ENCODE measurements at regions of chr2 and their contacts with region 1.

Region 1: GRCh38 chr2:36355151-36355889 is at the start of gene CRIM1:
- DNase-seq: peak; percentile 88
- H3K4me3 ChIP-seq: peak within 1 kb of the TSS; percentile 85 to 98 (median 87)
- H3K27ac ChIP-seq: peak within 1 kb of the TSS; percentile 75
- H3K4me1 ChIP-seq: peaks cover 42% of the 10 kb centered on the region
- H3K27me3 ChIP-seq: no peaks in the 10 kb centered on the region
- CTCF ChIP-seq: no peak
- POLR2A ChIP-seq: peak; percentile 98
- total RNA-seq, gene CRIM1: 649 and 675 TPM in 2 replicates

Region 2: GRCh38 chr2:35447215-35447614 is 908.1 kb before region 1 on chr2:
- CTCF ChIA-PET with region 1: no interaction called
- POLR2A ChIA-PET with region 1: no interaction called
- dilution Hi-C with region 1: no loop called
- intact Hi-C with region 1: no loop called
- DNase-seq: no peak
- H3K4me3 ChIP-seq: no peak overlapping the region
- H3K27ac ChIP-seq: no peak overlapping the region
- H3K4me1 ChIP-seq: no peaks in the 10 kb centered on the region
- H3K27me3 ChIP-seq: no peaks in the 10 kb centered on the region
- CTCF ChIP-seq: no peak
- POLR2A ChIP-seq: no peak

Region 3: DNA sequence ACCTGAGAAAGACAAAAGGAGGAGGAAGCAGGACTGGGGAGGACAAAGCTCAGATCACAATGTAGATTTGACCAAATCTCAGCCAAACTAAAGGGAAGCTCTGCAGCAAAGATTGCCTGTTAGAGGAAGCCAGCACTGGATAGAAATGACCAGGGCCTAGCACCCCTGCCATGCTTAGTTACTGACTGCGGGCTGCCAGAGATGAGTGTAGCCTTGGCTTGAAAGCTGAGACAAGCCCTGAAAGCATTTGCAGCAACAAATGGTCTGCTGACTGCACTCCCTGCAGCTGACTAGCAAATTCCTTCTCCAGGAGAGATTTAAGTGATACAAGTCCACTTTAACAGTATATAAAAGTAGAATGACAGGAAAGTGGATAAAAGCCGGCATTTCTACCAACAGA is 140.6 kb before region 1 on chr2:
- CTCF ChIA-PET with region 1: no interaction called
- POLR2A ChIA-PET with region 1: no interaction called
- dilution Hi-C with region 1: no loop called
- intact Hi-C with region 1: no loop called
- DNase-seq: no peak
- H3K4me3 ChIP-seq: no peak overlapping the region
- H3K27ac ChIP-seq: no peak overlapping the region
- H3K4me1 ChIP-seq: no peaks in the 10 kb centered on the region
- H3K27me3 ChIP-seq: peaks cover 0 to 2% of the 10 kb centered on the region in 2 experiments
- CTCF ChIP-seq: no peak
- POLR2A ChIP-seq: no peak

Region 4: DNA sequence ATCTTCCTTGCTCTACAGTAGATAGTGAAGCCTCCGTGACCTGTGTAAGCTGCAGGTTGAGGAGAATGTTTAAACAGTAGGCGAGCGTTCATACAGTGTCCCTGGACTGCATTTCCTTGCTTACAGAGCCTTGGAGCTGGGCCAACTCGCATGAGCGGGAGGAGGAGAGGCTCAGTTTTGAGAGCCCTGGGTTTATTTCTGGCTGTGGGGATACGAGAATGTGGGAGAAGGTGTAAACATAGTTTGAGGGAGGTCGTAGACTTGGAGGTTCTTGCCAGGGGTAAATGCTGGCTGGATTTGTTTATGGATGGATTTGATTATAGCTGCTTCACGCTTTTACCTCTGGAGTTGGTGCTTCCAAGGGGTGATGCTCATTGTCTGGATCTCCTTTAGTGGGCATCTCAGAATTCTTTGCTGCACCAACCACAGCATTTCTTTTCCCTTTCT is 21.0 kb after region 1 on chr2:
- CTCF ChIA-PET with region 1: interaction called, 20 read pairs
- POLR2A ChIA-PET with region 1: interaction called, 17 read pairs
- dilution Hi-C with region 1: no loop called
- intact Hi-C with region 1: loop called (anchors 1 kb)
- DNase-seq: peak; percentile 65
- H3K4me3 ChIP-seq: no peak overlapping the region
- H3K27ac ChIP-seq: peak overlapping the region; percentile 44
- H3K4me1 ChIP-seq: peaks cover 98% of the 10 kb centered on the region
- H3K27me3 ChIP-seq: no peaks in the 10 kb centered on the region
- CTCF ChIP-seq: no peak
- POLR2A ChIP-seq: no peak

Region 5: GRCh38 chr2:36413218-36413617 is 57.9 kb after region 1 on chr2:
- CTCF ChIA-PET with region 1: interaction called, 7 read pairs
- POLR2A ChIA-PET with region 1: interaction called, 5 read pairs
- dilution Hi-C with region 1: no loop called
- intact Hi-C with region 1: loop called (anchors 1 kb)
- DNase-seq: peak; percentile 88
- H3K4me3 ChIP-seq: peak overlapping the region in 1 of 3 experiments; percentile 8
- H3K27ac ChIP-seq: peak overlapping the region; percentile 92
- H3K4me1 ChIP-seq: peaks cover 88% of the 10 kb centered on the region
- H3K27me3 ChIP-seq: no peaks in the 10 kb centered on the region
- CTCF ChIP-seq: no peak
- POLR2A ChIP-seq: peak; percentile 78

Region 6: GRCh38 chr2:36502081-36502480 is 146.8 kb after region 1 on chr2:
- CTCF ChIA-PET with region 1: interaction called, 35 read pairs
- POLR2A ChIA-PET with region 1: interaction called, 5 read pairs
- dilution Hi-C with region 1: no loop called
- intact Hi-C with region 1: loop called (anchors 1 kb)
- DNase-seq: no peak
- H3K4me3 ChIP-seq: no peak overlapping the region
- H3K27ac ChIP-seq: no peak overlapping the region
- H3K4me1 ChIP-seq: no peaks in the 10 kb centered on the region
- H3K27me3 ChIP-seq: no peaks in the 10 kb centered on the region
- CTCF ChIP-seq: no peak
- POLR2A ChIP-seq: no peak

Region 7: GRCh38 chr2:36561237-36561944 is 206.1 kb after region 1 on chr2:
- CTCF ChIA-PET with region 1: interaction called, 9 read pairs
- POLR2A ChIA-PET with region 1: interaction called, 10 read pairs
- dilution Hi-C with region 1: no loop called
- intact Hi-C with region 1: loop called (anchors 1 kb)
- DNase-seq: peak; percentile 98
- H3K4me3 ChIP-seq: peak overlapping the region in 2 of 3 experiments; percentile 40 to 63
- H3K27ac ChIP-seq: peak overlapping the region; percentile 98
- H3K4me1 ChIP-seq: peaks cover 95% of the 10 kb centered on the region
- H3K27me3 ChIP-seq: no peaks in the 10 kb centered on the region
- CTCF ChIP-seq: no peak
- POLR2A ChIP-seq: no peak

Region 8: GRCh38 chr2:36672199-36672598 is 316.9 kb after region 1 on chr2:
- CTCF ChIA-PET with region 1: interaction called, 14 read pairs
- POLR2A ChIA-PET with region 1: no interaction called
- dilution Hi-C with region 1: no loop called
- intact Hi-C with region 1: no loop called
- DNase-seq: peak; percentile 60
- H3K4me3 ChIP-seq: no peak overlapping the region
- H3K27ac ChIP-seq: no peak overlapping the region
- H3K4me1 ChIP-seq: peaks cover 14% of the 10 kb centered on the region
- H3K27me3 ChIP-seq: no peaks in the 10 kb centered on the region
- CTCF ChIP-seq: peak; percentile 58
- POLR2A ChIP-seq: no peak